ENCODE measurements at regions of chr18 and their contacts with region 1.

Region 1: GRCh38 chr18:63410792-63411191 is 11.5 kb downstream of the VPS4B start:
- DNase-seq: no peak
- ATAC-seq: peak; percentile 58
- H3K4me3 Mint-ChIP-seq: no peak overlapping the region
- H3K27ac Mint-ChIP-seq: peak overlapping the region; percentile 18
- H3K4me1 Mint-ChIP-seq: peaks cover 50% of the 10 kb centered on the region
- H3K27me3 Mint-ChIP-seq: no peaks in the 10 kb centered on the region

Region 2: GRCh38 chr18:63422087-63422809 is 11.5 kb after region 1 on chr18 and contains the start of gene VPS4B:
- CTCF ChIA-PET with region 1: interaction called, 4 read pairs
- POLR2A ChIA-PET with region 1: interaction called, 26 read pairs
- DNase-seq: peak; percentile 100
- ATAC-seq: peak; percentile 95
- H3K4me3 Mint-ChIP-seq: peak within 1 kb of the TSS; percentile 98
- H3K27ac Mint-ChIP-seq: peak within 1 kb of the TSS; percentile 98
- H3K4me1 Mint-ChIP-seq: peaks cover 23% of the 10 kb centered on the region
- H3K27me3 Mint-ChIP-seq: peaks cover 4% of the 10 kb centered on the region
- total RNA-seq, gene VPS4B: 62.8 to 67.2 TPM

Region 3: GRCh38 chr18:63445037-63445436 is 34.2 kb after region 1 on chr18:
- CTCF ChIA-PET with region 1: no interaction called
- POLR2A ChIA-PET with region 1: no interaction called
- DNase-seq: no peak
- ATAC-seq: no peak
- H3K4me3 Mint-ChIP-seq: no peak overlapping the region
- H3K27ac Mint-ChIP-seq: no peak overlapping the region
- H3K4me1 Mint-ChIP-seq: no peaks in the 10 kb centered on the region
- H3K27me3 Mint-ChIP-seq: peaks cover 4% of the 10 kb centered on the region

Region 4: GRCh38 chr18:63562284-63562683 is 151.5 kb after region 1 on chr18:
- CTCF ChIA-PET with region 1: no interaction called
- POLR2A ChIA-PET with region 1: no interaction called
- DNase-seq: no peak
- ATAC-seq: no peak
- H3K4me3 Mint-ChIP-seq: no peak overlapping the region
- H3K27ac Mint-ChIP-seq: no peak overlapping the region
- H3K4me1 Mint-ChIP-seq: no peaks in the 10 kb centered on the region
- H3K27me3 Mint-ChIP-seq: peaks cover 5% of the 10 kb centered on the region